ENCODE measurements at regions of chrX and their contacts with region 1.

Region 1: DNA sequence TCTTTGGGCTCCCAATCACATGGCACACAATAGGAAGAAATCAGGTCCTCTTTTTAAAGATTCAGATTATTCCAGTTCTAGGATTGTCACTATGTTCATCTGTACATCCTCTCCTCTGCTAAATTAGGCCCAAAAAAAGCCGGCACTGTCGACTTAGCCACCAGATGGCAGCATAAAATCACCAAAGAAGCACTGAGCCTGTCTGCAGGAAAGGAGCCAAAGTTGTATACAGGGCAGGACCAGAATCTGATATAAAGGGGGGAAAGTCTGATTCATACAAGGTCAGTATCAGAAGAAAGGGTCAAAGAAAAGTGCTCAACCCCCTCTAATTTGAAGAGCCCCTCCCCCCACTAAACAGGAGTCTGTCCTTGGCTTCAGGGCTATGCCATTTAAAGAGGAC is 292.5 kb downstream of the CHIC1 start:
- DNase-seq: peak in 1 of 2 donors; percentile 66
- ATAC-seq: peak; percentile 53
- H3K4me3 ChIP-seq: no peak overlapping the region
- H3K27ac ChIP-seq: no peak overlapping the region
- H3K4me1 ChIP-seq: no peaks in the 10 kb centered on the region
- H3K27me3 ChIP-seq: no peaks in the 10 kb centered on the region

Region 2: GRCh38 chrX:74015379-74016019 is 160.0 kb after region 1 on chrX:
- intact Hi-C with region 1: loop called (anchors 1 to 2 kb)
- DNase-seq: peak in 1 of 2 donors; percentile 59
- ATAC-seq: peak; percentile 84
- H3K4me3 ChIP-seq: no peak overlapping the region
- H3K27ac ChIP-seq: no peak overlapping the region
- H3K4me1 ChIP-seq: no peaks in the 10 kb centered on the region
- H3K27me3 ChIP-seq: no peaks in the 10 kb centered on the region

Region 3: DNA sequence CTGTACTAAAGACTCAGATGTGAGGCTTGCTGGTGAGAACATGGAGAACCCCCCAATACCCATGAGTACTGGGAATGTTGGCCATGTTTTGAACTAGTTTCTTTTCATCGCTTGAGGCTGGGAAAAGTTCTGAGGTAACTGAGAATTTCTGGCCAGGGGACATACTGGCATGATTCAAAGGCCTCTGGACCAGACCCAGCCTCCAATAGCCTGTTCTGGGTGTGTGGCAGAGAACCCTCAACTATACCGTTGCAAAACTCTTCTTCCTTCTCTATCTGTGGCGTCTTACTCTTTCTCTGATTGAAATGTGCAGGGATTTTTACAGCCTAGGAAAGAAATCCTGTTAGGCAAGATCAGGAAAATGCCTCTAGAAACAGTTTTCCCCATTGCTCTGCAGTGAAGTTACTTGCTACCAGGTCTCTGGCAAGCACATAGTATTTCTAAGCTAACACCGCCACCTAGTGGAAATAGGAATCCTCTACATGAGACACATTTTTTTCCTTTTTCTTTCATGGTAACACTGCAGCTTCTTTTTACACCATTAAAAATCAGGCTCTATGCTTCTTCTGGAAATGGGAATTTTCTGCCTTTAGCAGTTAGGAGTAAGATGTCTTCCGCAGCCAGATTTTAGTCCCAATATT is 277.7 kb after region 1 on chrX:
- intact Hi-C with region 1: loop called (anchors 2 to 5 kb)
- DNase-seq: no peak
- ATAC-seq: peak; percentile 87
- H3K4me3 ChIP-seq: no peak overlapping the region
- H3K27ac ChIP-seq: peak overlapping the region in 1 of 2 donors; percentile 25
- H3K4me1 ChIP-seq: no peaks in the 10 kb centered on the region
- H3K27me3 ChIP-seq: no peaks in the 10 kb centered on the region

Region 4: GRCh38 chrX:74343343-74344279 is 488.1 kb after region 1 on chrX:
- intact Hi-C with region 1: loop called (anchors 2 to 10 kb)
- DNase-seq: peak in 1 of 2 donors; percentile 51
- ATAC-seq: peak; percentile 74
- H3K4me3 ChIP-seq: no peak overlapping the region
- H3K27ac ChIP-seq: no peak overlapping the region
- H3K4me1 ChIP-seq: no peaks in the 10 kb centered on the region
- H3K27me3 ChIP-seq: no peaks in the 10 kb centered on the region

Measured in aorta (tissue), 5 donors.